OCI-LY7 (cell line): ENCODE measurements at regions of chr11 and their contacts with region 1.

Region 1: DNA sequence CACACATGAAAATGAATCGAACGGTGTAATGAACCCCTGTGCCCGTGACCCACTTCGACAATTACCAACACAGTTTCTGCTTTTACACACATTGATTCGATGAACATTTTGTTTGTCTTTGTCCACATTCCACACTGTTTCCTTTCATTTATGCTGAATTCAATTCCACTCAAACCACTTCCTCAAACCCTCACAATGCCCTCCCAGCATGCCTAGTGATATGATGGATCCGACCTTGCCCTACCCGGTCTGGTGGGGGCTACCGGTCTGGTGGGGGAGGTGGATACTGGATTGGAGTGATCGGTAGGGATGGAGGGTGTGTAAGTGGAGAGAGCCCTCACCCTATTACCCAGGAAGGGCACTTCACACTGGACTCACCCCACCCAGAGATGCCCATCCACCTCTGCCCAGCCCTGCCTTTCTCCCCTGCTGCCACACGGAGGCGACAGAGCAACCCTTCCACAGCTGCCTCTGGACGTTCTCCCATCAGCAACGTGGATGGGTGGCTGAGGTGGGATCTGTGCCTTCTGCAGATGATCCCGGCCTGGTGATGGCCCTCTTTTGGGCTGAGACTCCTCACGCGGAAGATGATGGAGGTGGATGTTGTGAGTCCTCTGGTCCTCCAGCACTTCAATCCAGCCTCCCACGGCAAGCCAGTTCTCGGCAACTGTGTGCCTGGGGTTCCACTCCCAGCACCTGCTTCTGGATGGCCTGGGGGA is 33.0 kb upstream of the P2RY2 start:
- DNase-seq: peak; percentile 65
- H3K4me3 ChIP-seq: peak overlapping the region; percentile 54
- H3K27ac ChIP-seq: no peak overlapping the region
- H3K4me1 ChIP-seq: peaks cover 17% of the 10 kb centered on the region
- CTCF ChIP-seq: peak; percentile 93

Region 2: GRCh38 chr11:73236854-73237253 is 51.7 kb after region 1 on chr11:
- CTCF ChIA-PET with region 1: no interaction called
- POLR2A ChIA-PET with region 1: no interaction called
- intact Hi-C with region 1: loop called (anchors 1 kb)
- DNase-seq: peak; percentile 61
- H3K4me3 ChIP-seq: no peak overlapping the region
- H3K27ac ChIP-seq: no peak overlapping the region
- H3K4me1 ChIP-seq: no peaks in the 10 kb centered on the region
- CTCF ChIP-seq: peak; percentile 83

Region 3: GRCh38 chr11:73288873-73289707 is 104.0 kb after region 1 on chr11:
- CTCF ChIA-PET with region 1: interaction called, 3 read pairs
- POLR2A ChIA-PET with region 1: no interaction called
- intact Hi-C with region 1: loop called (anchors 1 kb)
- DNase-seq: peak; percentile 80
- H3K4me3 ChIP-seq: no peak overlapping the region
- H3K27ac ChIP-seq: no peak overlapping the region
- H3K4me1 ChIP-seq: peaks cover 19% of the 10 kb centered on the region
- CTCF ChIP-seq: peak; percentile 98

Region 4: GRCh38 chr11:73876424-73877300 is 691.5 kb after region 1 on chr11 and contains the starts of genes COA4 and PAAF1:
- CTCF ChIA-PET with region 1: no interaction called
- POLR2A ChIA-PET with region 1: no interaction called
- intact Hi-C with region 1: no loop called
- DNase-seq: peak; percentile 99
- H3K4me3 ChIP-seq: peak within 1 kb of the TSS; percentile 95
- H3K27ac ChIP-seq: peak within 1 kb of the TSS; percentile 92
- H3K4me1 ChIP-seq: peaks cover 26% of the 10 kb centered on the region
- CTCF ChIP-seq: no peak
- total RNA-seq, gene COA4: 153 and 171 TPM in 2 replicates
- total RNA-seq, gene PAAF1: 11.2 and 12.3 TPM in 2 replicates